GM12878 (cell line): ENCODE measurements at regions of chr1 and their contacts with region 1.

Region 1: DNA sequence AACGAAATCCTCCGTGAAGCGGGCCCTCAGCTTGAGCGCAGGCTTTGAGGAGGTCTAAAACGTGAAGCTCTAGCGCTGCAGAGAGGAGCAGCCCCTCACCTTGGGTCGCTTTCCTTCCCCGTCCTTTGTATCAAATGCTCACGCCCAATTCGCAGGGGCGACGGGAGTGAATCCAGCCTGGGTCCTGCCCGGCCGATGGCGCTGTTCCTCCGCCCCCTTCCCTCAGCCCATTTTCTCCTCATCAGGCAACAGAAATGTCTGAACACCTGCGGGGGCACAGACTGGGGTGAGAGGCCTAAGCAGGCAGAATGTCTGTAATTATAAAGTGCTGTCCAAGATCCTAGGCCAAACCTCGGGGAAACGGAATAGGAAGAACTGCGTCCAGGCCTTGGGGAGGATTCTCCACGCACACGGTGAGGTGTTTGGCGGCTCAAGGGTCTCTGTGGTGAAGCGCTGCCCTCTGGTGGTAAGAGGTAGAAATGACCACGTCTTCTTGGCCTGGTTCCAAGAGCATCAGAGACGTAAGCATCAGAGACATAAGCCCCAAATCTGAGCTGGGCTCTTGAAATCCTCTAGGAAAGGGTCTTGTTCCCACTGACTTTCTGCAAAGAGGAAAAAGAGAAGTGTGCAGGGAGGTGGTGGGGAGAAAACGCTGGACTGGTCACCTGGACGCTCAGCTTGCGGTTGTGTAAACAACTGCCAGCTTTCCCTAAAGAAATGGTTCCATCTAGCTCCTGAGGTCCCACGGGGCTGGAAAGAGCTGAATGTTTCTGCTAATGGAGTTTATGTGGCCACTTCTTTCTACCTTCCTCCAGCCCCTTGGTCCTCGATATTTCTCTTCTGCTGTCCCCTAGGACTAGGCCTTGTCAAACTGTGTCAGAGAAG is 92.1 kb upstream of the CD53 start:
- DNase-seq: no peak
- ATAC-seq: peak; percentile 81
- H3K4me3 ChIP-seq: no peak overlapping the region
- H3K27ac ChIP-seq: no peak overlapping the region
- H3K4me1 ChIP-seq: peaks cover 5% of the 10 kb centered on the region
- H3K27me3 ChIP-seq: no peaks in the 10 kb centered on the region
- CTCF ChIP-seq: peak; percentile 74 to 87 (median 83)
- EP300 ChIP-seq: no peak
- POLR2A ChIP-seq: no peak
- RAD21 ChIP-seq: peak; percentile 90

Region 2: GRCh38 chr1:110524311-110525251 is 256.3 kb before region 1 on chr1:
- CTCF ChIA-PET with region 1: interaction called, 46 read pairs
- POLR2A ChIA-PET with region 1: no interaction called
- RAD21 ChIA-PET with region 1: interaction called, 7 read pairs
- SMC1A ChIA-PET with region 1: interaction called, 5 read pairs
- in situ Hi-C with region 1: no loop called
- intact Hi-C with region 1: loop called (anchors 1 kb)
- DNase-seq: no peak
- ATAC-seq: peak; percentile 89
- H3K4me3 ChIP-seq: no peak overlapping the region
- H3K27ac ChIP-seq: no peak overlapping the region
- H3K4me1 ChIP-seq: no peaks in the 10 kb centered on the region
- H3K27me3 ChIP-seq: peaks cover 0 to 3% of the 10 kb centered on the region in 2 experiments; a peak in 3 of 4 replicates
- CTCF ChIP-seq: peak; percentile 75 to 85 (median 76)
- EP300 ChIP-seq: no peak
- POLR2A ChIP-seq: no peak
- RAD21 ChIP-seq: peak; percentile 78

Region 3: DNA sequence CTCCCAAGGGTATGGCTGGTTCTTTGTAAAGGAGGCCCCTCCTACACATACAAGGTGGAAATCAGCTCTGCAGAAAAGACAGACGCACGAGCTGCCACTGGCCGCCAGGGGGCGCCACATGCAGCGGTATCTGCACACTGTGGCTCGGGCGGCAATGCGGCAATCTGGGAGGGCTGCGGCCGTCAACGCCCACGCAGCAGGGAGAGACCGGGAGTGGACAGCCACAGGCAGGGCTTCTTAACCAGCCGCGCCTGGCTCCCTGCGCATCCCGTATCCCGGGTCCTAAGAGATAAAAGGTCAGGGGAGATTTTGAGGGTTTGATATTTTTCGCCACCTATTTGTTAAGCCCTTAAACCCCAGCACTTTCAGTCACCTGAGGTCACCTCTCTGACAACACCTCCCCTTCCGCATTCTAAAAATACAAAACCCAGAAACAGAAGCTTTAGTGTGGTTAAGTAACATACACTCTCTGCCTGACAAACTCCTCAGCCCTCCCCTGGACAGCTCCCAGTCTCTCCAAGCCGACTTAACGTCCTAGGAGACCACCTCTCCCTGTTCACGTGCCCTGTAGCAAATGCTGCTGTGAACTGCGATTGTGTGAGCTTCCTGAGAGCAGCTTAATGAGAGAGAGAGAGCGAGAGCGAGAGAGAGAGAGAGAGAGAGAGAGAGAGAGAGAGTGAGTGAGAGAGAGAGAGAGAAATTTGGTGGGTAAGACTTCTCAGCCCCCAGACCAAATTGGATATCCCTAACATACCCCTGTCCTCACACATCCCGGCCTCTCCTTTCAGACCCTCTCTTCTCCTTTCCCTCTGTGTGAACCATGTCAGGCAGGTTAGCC is 161.2 kb before region 1 on chr1:
- CTCF ChIA-PET with region 1: interaction called, 91 read pairs
- POLR2A ChIA-PET with region 1: interaction called, 4 read pairs
- RAD21 ChIA-PET with region 1: interaction called, 79 read pairs
- SMC1A ChIA-PET with region 1: interaction called, 89 read pairs
- in situ Hi-C with region 1: loop called (anchors 5 kb)
- intact Hi-C with region 1: loop called (anchors 1 kb)
- DNase-seq: peak; percentile 69
- ATAC-seq: peak; percentile 95
- H3K4me3 ChIP-seq: peak overlapping the region; percentile 64
- H3K27ac ChIP-seq: peak overlapping the region; percentile 57
- H3K4me1 ChIP-seq: peaks cover 16% of the 10 kb centered on the region
- H3K27me3 ChIP-seq: peaks cover 0 to 2% of the 10 kb centered on the region in 2 experiments; a peak in 1 of 4 replicates
- CTCF ChIP-seq: peak; percentile 96 to 97 (median 96)
- EP300 ChIP-seq: 0 out of 4 replicates have a peak, but pooled peaks of 1 of the 2 experiments have one; percentile 26
- POLR2A ChIP-seq: peak; percentile 59
- RAD21 ChIP-seq: peak; percentile 86

Region 4: GRCh38 chr1:110760321-110760720 is 20.5 kb before region 1 on chr1:
- CTCF ChIA-PET with region 1: interaction called, 93 read pairs
- POLR2A ChIA-PET with region 1: interaction called, 3 read pairs
- RAD21 ChIA-PET with region 1: interaction called, 19 read pairs
- SMC1A ChIA-PET with region 1: interaction called, 86 read pairs
- in situ Hi-C with region 1: no loop called
- intact Hi-C with region 1: no loop called
- DNase-seq: no peak
- ATAC-seq: no peak
- H3K4me3 ChIP-seq: no peak overlapping the region
- H3K27ac ChIP-seq: no peak overlapping the region
- H3K4me1 ChIP-seq: peaks cover 2% of the 10 kb centered on the region; the same call in 1 of the 2 replicates
- H3K27me3 ChIP-seq: no peaks in the 10 kb centered on the region
- CTCF ChIP-seq: no peak
- EP300 ChIP-seq: no peak
- POLR2A ChIP-seq: no peak
- RAD21 ChIP-seq: no peak

Region 5: DNA sequence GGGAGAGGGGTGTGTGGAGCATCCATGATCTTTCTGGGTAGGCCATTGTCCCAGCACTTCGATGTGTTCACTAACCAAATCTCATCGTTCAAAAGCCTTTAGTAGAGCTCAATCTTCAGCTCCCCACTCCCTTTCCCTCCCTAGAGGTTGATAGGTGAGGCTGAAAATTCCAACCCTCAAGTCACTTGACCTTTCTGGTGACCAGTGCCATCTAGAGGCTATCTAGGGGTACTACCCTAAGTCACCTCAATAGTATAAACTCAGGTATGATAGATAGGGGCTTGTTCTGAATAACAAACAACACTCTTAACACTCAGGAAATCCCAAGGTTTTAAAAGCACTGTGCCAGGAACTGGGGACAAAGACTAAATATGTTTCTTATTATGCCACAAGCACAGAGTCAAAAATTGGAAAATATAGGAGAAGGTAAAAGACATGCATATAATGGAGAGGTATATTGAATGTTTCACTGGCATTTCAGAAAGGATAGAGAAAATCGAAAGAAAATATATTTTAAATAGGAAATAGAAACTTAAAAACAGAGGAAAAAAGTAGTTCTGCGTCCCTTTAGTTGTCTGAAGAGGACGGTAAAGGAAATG is 49.2 kb after region 1 on chr1:
- CTCF ChIA-PET with region 1: interaction called, 26 read pairs
- POLR2A ChIA-PET with region 1: interaction called, 3 read pairs
- RAD21 ChIA-PET with region 1: interaction called, 4 read pairs
- SMC1A ChIA-PET with region 1: interaction called, 6 read pairs
- in situ Hi-C with region 1: no loop called
- intact Hi-C with region 1: loop called (anchors 1 kb)
- DNase-seq: peak; percentile 37
- ATAC-seq: peak; percentile 92
- H3K4me3 ChIP-seq: no peak overlapping the region
- H3K27ac ChIP-seq: no peak overlapping the region
- H3K4me1 ChIP-seq: no peaks in the 10 kb centered on the region
- H3K27me3 ChIP-seq: no peaks in the 10 kb centered on the region
- CTCF ChIP-seq: peak; percentile 65 to 89 (median 88)
- EP300 ChIP-seq: no peak
- POLR2A ChIP-seq: no peak
- RAD21 ChIP-seq: peak; percentile 80

Region 6: GRCh38 chr1:111334169-111334568 is 553.3 kb after region 1 on chr1:
- CTCF ChIA-PET with region 1: interaction called, 7 read pairs
- POLR2A ChIA-PET with region 1: no interaction called
- RAD21 ChIA-PET with region 1: no interaction called
- SMC1A ChIA-PET with region 1: interaction called, 3 read pairs
- in situ Hi-C with region 1: no loop called
- intact Hi-C with region 1: loop called (anchors 1 kb)
- DNase-seq: peak; percentile 33
- ATAC-seq: peak; percentile 85
- H3K4me3 ChIP-seq: no peak overlapping the region
- H3K27ac ChIP-seq: no peak overlapping the region
- H3K4me1 ChIP-seq: peaks cover 17% of the 10 kb centered on the region
- H3K27me3 ChIP-seq: no peaks in the 10 kb centered on the region
- CTCF ChIP-seq: peak; percentile 61 to 75 (median 73); a peak in 5 of 6 replicates
- EP300 ChIP-seq: no peak
- POLR2A ChIP-seq: no peak
- RAD21 ChIP-seq: peak; percentile 95